ENCODE measurements at regions of chr2 and their contacts with region 1.

Region 1: DNA sequence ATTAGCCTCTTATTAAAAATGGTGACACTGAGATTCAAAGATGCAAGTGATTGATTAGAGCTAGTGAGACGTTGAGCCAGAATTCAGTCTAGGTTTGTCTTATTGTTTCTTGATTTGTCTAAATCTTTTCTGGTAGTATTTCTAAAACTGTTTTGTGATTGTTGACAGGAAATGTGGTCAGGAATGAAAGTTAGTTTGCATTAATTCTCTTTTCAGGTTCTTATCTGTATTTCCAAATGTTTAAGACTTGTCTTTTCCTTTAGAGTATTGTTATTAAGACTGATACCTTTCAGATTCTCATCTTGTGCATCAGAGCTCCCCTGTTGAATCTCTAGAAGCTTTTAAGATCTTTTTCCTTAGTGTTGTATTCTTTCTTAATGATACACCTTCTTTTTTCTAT is 89.3 kb downstream of the MBD5 start:
- DNase-seq: no peak
- ATAC-seq: no peak
- H3K4me3 ChIP-seq: no peak overlapping the region
- H3K27ac ChIP-seq: no peak overlapping the region
- H3K4me1 ChIP-seq: no peaks in the 10 kb centered on the region
- H3K27me3 ChIP-seq: no peaks in the 10 kb centered on the region
- CTCF ChIP-seq: no peak

Region 2: DNA sequence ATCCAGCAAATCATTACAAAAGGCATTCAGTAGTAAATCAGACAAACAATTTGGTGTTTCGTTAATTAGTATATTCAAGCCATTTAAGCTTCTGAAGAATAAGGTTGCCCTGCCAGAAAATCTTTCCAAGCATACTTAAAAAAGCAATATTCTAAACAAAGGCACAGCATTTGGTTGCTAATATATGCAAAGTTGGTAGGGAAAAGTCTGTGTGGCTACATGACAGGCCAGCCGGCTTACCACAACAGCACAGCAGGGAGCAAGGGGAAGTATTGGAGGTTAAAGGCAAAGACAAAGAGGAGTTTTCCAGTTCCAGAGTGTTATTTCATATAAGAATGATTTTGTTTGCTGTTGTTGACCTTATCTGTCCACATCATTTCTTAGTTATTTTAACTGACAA is 193.0 kb after region 1 on chr2:
- CTCF ChIA-PET with region 1: no interaction called
- POLR2A ChIA-PET with region 1: no interaction called
- intact Hi-C with region 1: no loop called
- DNase-seq: no peak
- ATAC-seq: no peak
- H3K4me3 ChIP-seq: no peak overlapping the region
- H3K27ac ChIP-seq: no peak overlapping the region
- H3K4me1 ChIP-seq: no peaks in the 10 kb centered on the region
- H3K27me3 ChIP-seq: no peaks in the 10 kb centered on the region
- CTCF ChIP-seq: no peak

Region 3: GRCh38 chr2:148739454-148740105 is 629.4 kb after region 1 on chr2:
- CTCF ChIA-PET with region 1: no interaction called
- POLR2A ChIA-PET with region 1: interaction called, 19 read pairs
- intact Hi-C with region 1: no loop called
- DNase-seq: no peak
- ATAC-seq: no peak
- H3K4me3 ChIP-seq: no peak overlapping the region
- H3K27ac ChIP-seq: no peak overlapping the region
- H3K4me1 ChIP-seq: no peaks in the 10 kb centered on the region
- H3K27me3 ChIP-seq: no peaks in the 10 kb centered on the region
- CTCF ChIP-seq: no peak